GM23248 (cell line): ENCODE measurements at regions of chr13 and their contacts with region 1.

Region 1: GRCh38 chr13:108322206-108322824 is 52.8 kb downstream of the TNFSF13B start:
- DNase-seq: peak; percentile 70
- H3K4me3 ChIP-seq: no peak overlapping the region
- H3K27ac ChIP-seq: no peak overlapping the region
- H3K4me1 ChIP-seq: no peaks in the 10 kb centered on the region
- H3K27me3 ChIP-seq: peaks cover 23% of the 10 kb centered on the region

Region 2: GRCh38 chr13:108777421-108778420 is 455.4 kb after region 1 on chr13:
- in situ Hi-C with region 1: no loop called
- DNase-seq: no peak
- H3K4me3 ChIP-seq: no peak overlapping the region
- H3K27ac ChIP-seq: no peak overlapping the region
- H3K4me1 ChIP-seq: no peaks in the 10 kb centered on the region
- H3K27me3 ChIP-seq: no peaks in the 10 kb centered on the region

Region 3: DNA sequence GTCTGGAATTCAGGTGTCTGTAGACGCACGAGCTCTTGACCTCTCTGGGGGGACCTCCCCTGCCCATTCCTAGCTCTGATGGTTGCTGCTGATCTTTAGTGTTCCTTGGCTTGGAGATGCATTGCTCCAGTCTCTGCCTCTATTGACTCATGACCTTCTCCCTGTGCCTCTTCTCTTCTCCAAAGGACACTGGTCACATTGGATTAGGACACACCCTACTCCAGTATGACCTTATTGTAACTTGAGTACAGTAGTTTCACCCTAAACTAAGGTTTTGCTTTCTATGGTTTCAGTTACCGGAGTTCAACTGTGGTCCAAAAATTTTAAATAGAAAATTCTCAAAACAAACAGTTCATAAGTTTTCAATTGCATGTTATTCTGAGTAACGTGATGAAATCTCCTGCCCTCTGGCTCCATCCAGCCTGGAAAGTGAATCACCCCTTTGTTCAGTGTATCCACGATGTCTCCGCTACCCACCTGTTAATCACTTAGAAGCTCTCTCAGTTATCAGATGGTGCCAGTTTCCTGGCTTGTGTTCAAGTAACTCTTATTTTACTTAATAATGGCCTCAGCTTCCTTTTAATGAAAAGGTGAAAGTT is 580.3 kb after region 1 on chr13:
- in situ Hi-C with region 1: loop called (anchors 10 kb)
- DNase-seq: peak; percentile 31
- H3K4me3 ChIP-seq: no peak overlapping the region
- H3K27ac ChIP-seq: no peak overlapping the region
- H3K4me1 ChIP-seq: no peaks in the 10 kb centered on the region
- H3K27me3 ChIP-seq: no peaks in the 10 kb centered on the region; the same call in 1 of the 2 replicates